ENCODE measurements at regions of chr12 and their contacts with region 1.

Region 1: GRCh38 chr12:110742718-110743570 is at the start of gene PPP1CC:
- DNase-seq: peak; percentile 81 to 93 (median 91)
- ATAC-seq: peak; percentile 98
- H3K4me3 ChIP-seq: peak within 1 kb of the TSS; percentile 68
- H3K4me3 Mint-ChIP-seq: peak within 1 kb of the TSS; percentile 89 to 100 (median 99)
- H3K27ac ChIP-seq: peak within 1 kb of the TSS; percentile 79
- H3K27ac Mint-ChIP-seq: peak within 1 kb of the TSS; percentile 94 to 99 (median 97)
- H3K4me1 ChIP-seq: peaks cover 18 to 21% of the 10 kb centered on the region in 2 donors
- H3K4me1 Mint-ChIP-seq: peaks cover 34 to 52% (median 46%) of the 10 kb centered on the region in 7 donors
- H3K27me3 ChIP-seq: no peaks in the 10 kb centered on the region
- H3K27me3 Mint-ChIP-seq: no peaks in the 10 kb centered on the region
- total RNA-seq, gene PPP1CC: 108 to 218 (median 145) TPM

Region 2: DNA sequence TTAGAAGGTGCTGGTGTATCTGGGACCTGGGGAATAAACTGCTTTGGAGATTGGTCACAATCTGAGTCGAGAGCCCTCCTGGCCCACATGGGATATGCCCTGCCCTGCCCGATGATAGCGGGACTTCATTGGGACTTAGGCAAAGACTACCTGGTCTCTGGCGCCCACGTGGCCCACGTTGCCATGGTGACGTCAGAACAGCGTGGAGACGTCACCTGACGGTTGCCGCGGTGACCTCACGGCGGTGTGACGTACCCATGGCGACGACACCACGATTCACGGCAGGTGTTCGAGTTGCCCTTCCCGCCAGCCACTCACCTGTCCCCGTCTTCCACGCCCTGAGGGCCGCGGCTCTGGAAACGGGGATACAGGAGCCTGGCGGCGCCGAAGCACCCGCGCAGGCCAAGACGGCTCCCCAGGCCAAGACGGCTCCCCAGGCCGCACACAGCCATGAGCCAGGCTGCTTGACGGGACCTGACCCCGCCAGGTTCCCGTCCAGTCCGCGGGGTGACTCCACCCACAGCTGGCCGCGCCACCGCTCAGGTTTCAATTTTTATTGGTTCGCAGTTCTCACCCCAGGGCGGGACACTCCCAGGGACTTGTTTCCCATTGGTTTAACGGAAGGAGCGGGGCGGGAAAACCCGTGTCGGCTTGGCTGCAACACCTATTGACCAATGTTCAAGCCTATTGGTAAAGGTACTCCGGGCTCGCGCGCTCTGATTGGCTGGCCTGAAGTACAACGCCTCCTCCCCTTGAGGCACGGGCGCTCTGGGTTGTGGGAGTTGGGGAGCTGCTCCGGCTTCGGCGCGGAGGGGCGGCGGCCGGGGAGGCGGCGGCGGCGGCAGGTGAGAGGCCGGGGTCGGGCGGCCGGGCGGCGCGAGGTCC is 1169.7 kb before region 1 on chr12 and contains the starts of genes MMAB and MVK:
- CTCF ChIA-PET with region 1: no interaction called
- POLR2A ChIA-PET with region 1: no interaction called
- intact Hi-C with region 1: loop called in 1 of 2 experiments (anchors 5 kb)
- DNase-seq: peak; percentile 87 to 99 (median 99)
- ATAC-seq: peak; percentile 97
- H3K4me3 ChIP-seq: peak within 1 kb of the TSS; percentile 75
- H3K4me3 Mint-ChIP-seq: peak within 1 kb of the TSS; percentile 90 to 97 (median 94)
- H3K27ac ChIP-seq: peak within 1 kb of the TSS; percentile 95
- H3K27ac Mint-ChIP-seq: peak within 1 kb of the TSS; percentile 87 to 100 (median 95)
- H3K4me1 ChIP-seq: peaks cover 13 to 16% of the 10 kb centered on the region in 2 donors
- H3K4me1 Mint-ChIP-seq: peaks cover 9 to 39% (median 36%) of the 10 kb centered on the region in 7 donors
- H3K27me3 ChIP-seq: no peaks in the 10 kb centered on the region
- H3K27me3 Mint-ChIP-seq: no peaks in the 10 kb centered on the region
- total RNA-seq, gene MMAB: 13.5 to 24.7 (median 20.1) TPM
- total RNA-seq, gene MVK: 10.0 to 14.8 (median 11.7) TPM

Region 3: DNA sequence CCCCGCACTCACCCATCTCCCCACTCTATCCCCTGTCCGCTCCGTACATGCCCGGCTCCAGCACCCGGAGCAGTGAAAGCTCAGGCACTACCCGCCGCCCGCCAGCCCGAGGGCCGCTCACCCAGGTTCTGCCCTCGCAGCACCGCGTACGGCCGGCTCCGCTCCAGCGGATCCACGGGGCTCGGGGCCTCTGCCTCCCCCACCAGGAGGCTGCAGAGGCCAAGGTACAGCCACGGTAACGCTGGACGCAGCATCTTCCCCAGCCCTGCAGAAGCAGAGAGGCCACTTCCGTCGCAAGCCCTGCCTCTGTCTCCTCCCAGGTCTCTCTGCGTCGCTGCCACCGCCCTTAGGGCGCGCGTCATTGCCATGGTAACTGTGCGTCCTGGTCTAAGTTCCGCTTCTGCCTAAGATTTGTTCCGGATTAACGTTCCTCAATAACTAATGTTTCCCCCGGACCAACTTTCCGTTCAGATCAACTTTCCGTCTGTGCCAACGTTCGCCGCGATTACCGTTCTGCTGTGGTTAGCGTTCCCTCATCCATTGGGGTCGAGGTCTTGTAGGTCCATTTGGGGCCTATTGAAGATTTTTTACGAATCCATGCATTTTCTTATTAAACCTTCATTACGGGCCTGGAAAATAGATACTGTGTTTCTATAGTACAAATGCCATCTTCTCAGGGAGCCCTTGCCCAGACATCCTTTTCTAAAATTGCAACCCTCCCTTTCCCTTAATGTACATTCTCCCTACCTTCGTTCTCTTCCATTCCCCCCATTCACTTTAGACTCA is 694.5 kb before region 1 on chr12 and contains the start of gene C12orf76:
- CTCF ChIA-PET with region 1: no interaction called
- POLR2A ChIA-PET with region 1: no interaction called
- intact Hi-C with region 1: loop called in 1 of 2 experiments (anchors 1 kb)
- DNase-seq: peak; percentile 67 to 92 (median 90)
- ATAC-seq: peak; percentile 100
- H3K4me3 ChIP-seq: peak within 1 kb of the TSS; percentile 81
- H3K4me3 Mint-ChIP-seq: peak within 1 kb of the TSS; percentile 84 to 97 (median 93)
- H3K27ac ChIP-seq: peak within 1 kb of the TSS; percentile 77
- H3K27ac Mint-ChIP-seq: peak within 1 kb of the TSS; percentile 90 to 99 (median 96)
- H3K4me1 ChIP-seq: peaks cover 19% of the 10 kb centered on the region in 2 donors
- H3K4me1 Mint-ChIP-seq: peaks cover 16 to 46% (median 34%) of the 10 kb centered on the region in 7 donors
- H3K27me3 ChIP-seq: no peaks in the 10 kb centered on the region
- H3K27me3 Mint-ChIP-seq: no peaks in the 10 kb centered on the region
- total RNA-seq, gene C12orf76: 14.6 to 28.7 (median 27.8) TPM

Region 4: GRCh38 chr12:110501752-110502738 is 240.9 kb before region 1 on chr12 and contains the starts of genes RAD9B and VPS29:
- CTCF ChIA-PET with region 1: no interaction called
- POLR2A ChIA-PET with region 1: interaction called, 3 read pairs
- intact Hi-C with region 1: loop called in 1 of 2 experiments (anchors 1 kb)
- DNase-seq: peak; percentile 91 to 100 (median 99)
- ATAC-seq: peak; percentile 98
- H3K4me3 ChIP-seq: peak within 1 kb of the TSS; percentile 86
- H3K4me3 Mint-ChIP-seq: peak within 1 kb of the TSS; percentile 88 to 100 (median 97)
- H3K27ac ChIP-seq: peak within 1 kb of the TSS; percentile 89
- H3K27ac Mint-ChIP-seq: peak within 1 kb of the TSS; percentile 93 to 100 (median 97)
- H3K4me1 ChIP-seq: peaks cover 20 to 22% of the 10 kb centered on the region in 2 donors
- H3K4me1 Mint-ChIP-seq: peaks cover 22 to 52% (median 39%) of the 10 kb centered on the region in 7 donors
- H3K27me3 ChIP-seq: no peaks in the 10 kb centered on the region
- H3K27me3 Mint-ChIP-seq: peaks cover 0 to 3% (median 0%) of the 10 kb centered on the region in 5 donors
- total RNA-seq, gene RAD9B: 0.60 to 2.9 (median 1.1) TPM
- total RNA-seq, gene VPS29: 78.5 to 131 (median 115) TPM

Region 5: DNA sequence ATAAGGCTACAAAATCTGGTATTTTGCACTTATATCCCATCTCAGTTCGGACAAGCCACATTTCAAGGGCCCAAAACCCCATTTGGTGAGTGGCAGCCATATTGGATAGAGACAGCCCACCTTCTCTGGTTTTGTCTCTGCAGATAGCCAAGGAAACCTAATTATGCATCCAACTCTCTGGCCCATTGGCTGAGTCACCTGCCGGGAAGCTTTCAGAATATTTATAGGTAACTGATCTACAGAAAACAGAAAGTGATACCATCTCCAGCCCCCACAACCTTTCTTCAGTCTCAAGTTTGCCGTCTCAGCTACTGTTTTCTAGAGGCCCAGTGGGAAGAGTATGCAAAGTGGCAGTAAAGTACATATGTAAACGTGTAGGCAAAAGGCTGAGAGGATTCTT is 33.5 kb after region 1 on chr12:
- CTCF ChIA-PET with region 1: no interaction called
- POLR2A ChIA-PET with region 1: interaction called, 4 read pairs
- intact Hi-C with region 1: loop called (anchors 1 kb)
- DNase-seq: peak in 1 of 9 donors; percentile 64
- ATAC-seq: no peak
- H3K4me3 ChIP-seq: no peak overlapping the region
- H3K4me3 Mint-ChIP-seq: peak overlapping the region in 5 of 10 donors; percentile 4 to 60 (median 7)
- H3K27ac ChIP-seq: no peak overlapping the region
- H3K27ac Mint-ChIP-seq: peak overlapping the region; percentile 12 to 91 (median 64)
- H3K4me1 ChIP-seq: peaks cover 9 to 43% of the 10 kb centered on the region in 2 donors
- H3K4me1 Mint-ChIP-seq: peaks cover 28 to 66% (median 60%) of the 10 kb centered on the region in 7 donors
- H3K27me3 ChIP-seq: no peaks in the 10 kb centered on the region
- H3K27me3 Mint-ChIP-seq: no peaks in the 10 kb centered on the region

Region 6: DNA sequence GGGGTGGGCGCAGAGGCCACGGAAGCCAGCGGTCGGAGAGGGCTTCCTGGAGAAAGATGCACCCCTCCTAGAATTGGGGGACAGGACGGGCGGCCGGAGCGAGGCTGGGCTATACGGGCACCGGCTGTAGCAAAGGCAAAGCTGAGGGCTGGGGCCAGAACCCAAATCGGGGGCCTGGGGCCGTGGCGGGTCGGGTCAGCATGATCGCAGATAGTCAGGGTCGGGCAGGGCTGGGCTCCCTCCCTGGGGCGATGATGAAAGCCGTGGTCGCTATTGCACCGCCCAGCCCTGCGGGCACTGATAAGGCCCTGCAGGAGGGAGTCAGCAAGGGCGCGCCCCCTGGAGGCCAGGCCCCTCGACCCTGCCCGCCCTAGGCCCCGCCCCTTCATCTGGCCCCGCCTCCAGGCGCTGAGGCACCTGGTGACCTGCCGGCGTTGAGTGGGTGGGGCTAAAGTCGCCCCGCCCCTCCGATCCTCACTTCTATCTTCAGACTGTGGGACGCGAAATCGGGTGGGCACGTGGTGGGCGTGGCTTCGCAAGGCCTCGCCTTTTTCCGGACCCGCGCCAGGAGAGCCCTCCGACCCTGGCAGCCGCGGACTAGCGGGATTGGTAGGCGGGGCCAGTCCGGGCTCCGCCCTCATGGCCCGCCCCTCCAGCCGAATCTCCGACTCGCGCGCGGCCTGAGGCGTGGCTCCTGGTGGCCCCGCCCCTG is 662.4 kb after region 1 on chr12:
- CTCF ChIA-PET with region 1: no interaction called
- POLR2A ChIA-PET with region 1: no interaction called
- intact Hi-C with region 1: loop called in 1 of 2 experiments (anchors 10 kb)
- DNase-seq: peak; percentile 96 to 98 (median 97)
- ATAC-seq: peak; percentile 89
- H3K4me3 ChIP-seq: peak overlapping the region; percentile 68
- H3K4me3 Mint-ChIP-seq: peak overlapping the region; percentile 78 to 96 (median 90)
- H3K27ac ChIP-seq: peak overlapping the region; percentile 97
- H3K27ac Mint-ChIP-seq: peak overlapping the region; percentile 75 to 96 (median 89)
- H3K4me1 ChIP-seq: peaks cover 50 to 53% of the 10 kb centered on the region in 2 donors
- H3K4me1 Mint-ChIP-seq: peaks cover 34 to 63% (median 53%) of the 10 kb centered on the region in 7 donors
- H3K27me3 ChIP-seq: no peaks in the 10 kb centered on the region
- H3K27me3 Mint-ChIP-seq: no peaks in the 10 kb centered on the region

Region 7: DNA sequence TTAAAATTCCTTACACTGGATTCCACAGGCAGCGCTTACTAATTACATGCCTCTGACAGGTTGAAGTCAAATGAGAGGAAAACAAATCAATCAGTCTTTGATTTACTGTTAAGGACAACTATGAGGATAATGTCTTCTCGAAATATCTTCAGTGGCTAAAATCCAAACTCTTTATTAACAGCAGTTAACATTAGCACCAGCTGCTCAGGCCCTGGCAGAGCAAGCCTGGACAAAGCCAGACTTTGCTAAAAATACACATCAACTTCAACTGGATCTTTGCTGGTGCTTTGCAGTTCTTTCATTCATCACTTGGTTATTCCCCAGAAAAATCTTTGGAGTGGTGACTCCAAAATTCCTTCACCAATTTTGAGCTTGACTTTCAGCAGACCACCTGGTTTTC is 1540.6 kb after region 1 on chr12:
- CTCF ChIA-PET with region 1: no interaction called
- POLR2A ChIA-PET with region 1: no interaction called
- intact Hi-C with region 1: no loop called
- DNase-seq: no peak
- ATAC-seq: no peak
- H3K4me3 ChIP-seq: no peak overlapping the region
- H3K4me3 Mint-ChIP-seq: no peak overlapping the region
- H3K27ac ChIP-seq: no peak overlapping the region
- H3K27ac Mint-ChIP-seq: no peak overlapping the region
- H3K4me1 ChIP-seq: no peaks in the 10 kb centered on the region
- H3K4me1 Mint-ChIP-seq: no peaks in the 10 kb centered on the region
- H3K27me3 ChIP-seq: no peaks in the 10 kb centered on the region
- H3K27me3 Mint-ChIP-seq: no peaks in the 10 kb centered on the region